Heart left ventricle (tissue), 16 donors: ENCODE measurements at regions of chr19 and their contacts with region 1.

Region 1: GRCh38 chr19:13060964-13061927 is 41.4 kb downstream of the LYL1 start:
- DNase-seq: peak; percentile 81 to 93 (median 90)
- ATAC-seq: peak; percentile 51 to 80 (median 70)
- H3K4me3 ChIP-seq: peak overlapping the region in 11 of 12 donors; percentile 20 to 58 (median 48)
- H3K27ac ChIP-seq: peak overlapping the region; percentile 67 to 98 (median 96)
- H3K4me1 ChIP-seq: peaks cover 32 to 100% (median 99%) of the 10 kb centered on the region in 12 donors
- H3K27me3 ChIP-seq: no peaks in the 10 kb centered on the region
- CTCF ChIP-seq: peak; percentile 94 to 100 (median 98)
- POLR2A ChIP-seq: no peak

Region 2: DNA sequence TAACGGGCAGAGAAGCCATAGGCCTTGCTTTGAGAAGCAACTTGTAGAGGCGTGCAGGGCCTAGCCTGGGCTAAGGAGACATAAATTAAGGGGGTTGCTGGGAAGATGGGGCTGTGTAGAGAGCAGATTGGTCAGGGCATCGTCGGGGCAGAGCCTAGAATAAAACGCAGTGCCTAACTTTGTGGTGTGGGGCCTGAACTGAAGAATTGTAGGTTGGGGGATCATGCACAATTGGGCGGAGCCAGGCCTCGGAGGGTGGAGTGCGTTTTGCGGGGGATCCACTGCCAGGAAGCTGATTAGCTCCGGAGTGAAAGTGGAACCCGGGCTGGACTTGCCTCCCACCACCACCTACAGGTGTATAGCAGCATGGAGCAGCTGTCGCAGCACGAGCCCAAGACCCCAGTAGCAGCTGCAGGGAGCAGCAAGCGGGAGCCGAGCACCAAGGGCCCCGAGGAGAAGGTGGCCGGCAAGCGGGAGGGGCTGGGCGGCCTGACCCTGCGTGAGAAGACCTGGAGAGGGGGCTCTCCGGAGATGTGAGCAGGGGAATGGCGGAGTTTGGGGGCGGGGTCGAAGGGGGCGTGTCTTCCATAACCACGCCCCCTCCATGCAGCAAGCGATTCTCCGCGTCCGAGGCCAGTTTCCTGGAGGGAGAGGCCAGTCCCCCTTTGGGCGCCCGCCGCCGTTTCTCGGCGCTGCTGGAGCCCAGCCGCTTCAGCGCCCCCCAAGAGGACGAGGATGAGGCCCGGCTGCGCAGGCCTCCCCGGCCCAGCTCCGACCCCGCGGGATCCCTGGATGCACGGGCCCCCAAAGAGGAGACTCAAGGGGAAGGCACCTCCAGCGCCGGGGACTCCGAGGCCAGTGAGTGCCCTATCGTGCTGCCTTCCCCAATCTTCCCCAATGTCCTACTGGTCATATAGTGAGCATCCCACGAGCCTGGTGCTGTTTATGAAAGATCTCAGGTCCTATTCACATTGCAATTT is 193.8 kb before region 1 on chr19:
- intact Hi-C with region 1: no loop called
- DNase-seq: peak in 4 of 5 donors; percentile 39 to 73 (median 54)
- ATAC-seq: peak in 3 of 4 donors; percentile 44 to 66 (median 60)
- H3K4me3 ChIP-seq: peak overlapping the region in 10 of 12 donors; percentile 12 to 51 (median 40)
- H3K27ac ChIP-seq: no peak overlapping the region
- H3K4me1 ChIP-seq: peaks cover 0 to 9% (median 4%) of the 10 kb centered on the region in 12 donors
- H3K27me3 ChIP-seq: peaks cover 0 to 22% (median 6%) of the 10 kb centered on the region in 9 donors
- CTCF ChIP-seq: no peak
- POLR2A ChIP-seq: no peak

Region 3: GRCh38 chr19:12913011-12913561 is 148.2 kb before region 1 on chr19:
- intact Hi-C with region 1: no loop called
- DNase-seq: peak; percentile 73 to 85 (median 79)
- ATAC-seq: peak; percentile 77 to 92 (median 85)
- H3K4me3 ChIP-seq: peak overlapping the region in 9 of 12 donors; percentile 6 to 44 (median 24)
- H3K27ac ChIP-seq: peak overlapping the region; percentile 34 to 84 (median 65)
- H3K4me1 ChIP-seq: peaks cover 0 to 25% (median 19%) of the 10 kb centered on the region in 12 donors
- H3K27me3 ChIP-seq: no peaks in the 10 kb centered on the region
- CTCF ChIP-seq: no peak
- POLR2A ChIP-seq: no peak

Region 4: GRCh38 chr19:12983542-12984142 is 77.6 kb before region 1 on chr19:
- intact Hi-C with region 1: loop called (anchors 1 to 5 kb)
- DNase-seq: peak; percentile 73 to 92 (median 83)
- ATAC-seq: peak; percentile 30 to 83 (median 78)
- H3K4me3 ChIP-seq: peak overlapping the region in 10 of 12 donors; percentile 26 to 50 (median 42)
- H3K27ac ChIP-seq: peak overlapping the region in 1 of 12 donors; percentile 47
- H3K4me1 ChIP-seq: peaks cover 0 to 28% (median 15%) of the 10 kb centered on the region in 12 donors
- H3K27me3 ChIP-seq: peaks cover 0 to 5% (median 0%) of the 10 kb centered on the region in 9 donors
- CTCF ChIP-seq: peak; percentile 76 to 99 (median 97)
- POLR2A ChIP-seq: peak in 1 of 2 donors; percentile 27

Region 5: DNA sequence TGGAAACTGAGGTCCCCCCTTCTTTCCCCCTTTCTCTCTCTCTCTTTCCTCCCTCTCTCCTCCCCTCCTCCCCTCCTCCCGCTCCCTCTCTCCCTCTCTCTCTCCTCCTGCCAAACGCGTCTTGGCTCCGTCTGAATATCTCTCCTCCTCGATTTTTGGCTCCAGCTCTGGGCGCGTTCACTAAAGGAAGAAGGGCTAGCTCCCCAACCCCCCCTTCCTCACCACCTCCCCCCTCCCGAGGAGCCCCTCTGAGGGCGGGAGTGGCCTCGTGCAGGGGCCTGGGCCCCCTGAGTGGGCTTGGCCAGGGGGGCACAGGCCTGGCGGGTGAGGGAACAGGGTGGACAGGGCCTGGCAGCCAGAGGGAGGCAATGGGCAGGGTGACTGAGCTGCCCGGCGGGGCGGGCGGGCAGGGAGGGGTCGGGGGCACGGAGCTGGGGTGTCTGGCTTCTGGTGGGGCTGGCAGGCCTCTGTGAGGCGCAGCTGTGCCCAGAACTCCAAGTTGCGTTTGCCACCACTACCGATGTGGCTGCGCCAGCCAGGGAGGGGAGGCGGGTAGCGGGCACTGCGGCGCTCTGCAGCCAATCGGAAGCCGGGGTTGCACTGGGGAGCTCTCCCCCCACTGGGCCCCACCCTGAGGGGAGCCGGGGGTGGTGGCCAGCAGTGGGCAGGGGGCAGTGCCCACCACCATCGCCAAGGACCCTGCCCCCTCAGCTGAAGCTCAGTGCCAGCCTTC is 58.9 kb before region 1 on chr19:
- intact Hi-C with region 1: loop called in 4 of 10 experiments (anchors 5 kb)
- DNase-seq: peak; percentile 72 to 87 (median 76)
- ATAC-seq: peak; percentile 67 to 81 (median 74)
- H3K4me3 ChIP-seq: peak overlapping the region in 11 of 12 donors; percentile 8 to 51 (median 38)
- H3K27ac ChIP-seq: peak overlapping the region; percentile 80 to 97 (median 92)
- H3K4me1 ChIP-seq: peaks cover 0 to 80% (median 37%) of the 10 kb centered on the region in 12 donors
- H3K27me3 ChIP-seq: no peaks in the 10 kb centered on the region
- CTCF ChIP-seq: peak in 7 of 12 donors; percentile 7 to 51 (median 32)
- POLR2A ChIP-seq: no peak

Region 6: DNA sequence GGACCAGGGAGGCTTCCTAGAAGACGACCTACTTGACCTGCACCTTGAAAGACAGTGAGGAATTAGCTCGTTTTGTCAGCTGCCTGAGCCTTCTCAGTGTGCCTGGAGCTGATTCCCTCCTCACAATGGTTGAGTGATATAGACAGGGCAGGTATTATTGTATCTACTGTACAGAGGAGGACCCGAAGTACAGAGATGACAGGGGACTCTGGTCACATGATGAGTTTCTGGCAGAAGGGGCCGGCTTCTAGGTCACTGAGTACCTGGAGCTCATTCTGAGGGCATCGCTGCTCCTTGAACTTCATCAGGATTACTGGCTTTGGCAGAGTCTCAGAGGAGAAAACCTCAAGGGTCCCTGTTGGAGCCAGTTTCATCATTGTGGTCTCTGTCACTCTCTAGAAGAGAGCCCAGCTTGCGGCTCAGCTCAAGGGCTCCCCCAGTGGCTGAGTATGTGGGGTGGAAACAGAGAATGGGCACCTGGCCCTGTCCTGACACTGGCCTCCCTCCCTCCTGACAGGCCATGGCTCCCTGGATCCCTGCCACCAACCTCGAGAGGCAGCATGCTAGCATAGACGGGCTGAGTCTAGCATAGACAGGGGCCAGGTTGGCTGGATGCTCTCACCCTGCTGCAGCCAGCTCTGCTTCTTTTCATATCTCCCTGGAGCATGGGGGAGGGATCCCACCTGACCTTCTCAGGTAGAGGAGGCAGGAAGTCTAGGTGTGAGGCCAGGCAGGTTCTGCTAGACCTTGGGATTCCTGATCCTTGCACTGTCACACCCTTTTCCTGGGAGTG is 27.2 kb before region 1 on chr19:
- intact Hi-C with region 1: loop called in 6 of 10 experiments (anchors 2 to 5 kb)
- DNase-seq: peak; percentile 82 to 92 (median 88)
- ATAC-seq: peak; percentile 43 to 64 (median 58)
- H3K4me3 ChIP-seq: no peak overlapping the region
- H3K27ac ChIP-seq: peak overlapping the region; percentile 37 to 89 (median 78)
- H3K4me1 ChIP-seq: peaks cover 17 to 100% (median 96%) of the 10 kb centered on the region in 12 donors
- H3K27me3 ChIP-seq: no peaks in the 10 kb centered on the region
- CTCF ChIP-seq: peak; percentile 61 to 85 (median 78)
- POLR2A ChIP-seq: no peak

Region 7: DNA sequence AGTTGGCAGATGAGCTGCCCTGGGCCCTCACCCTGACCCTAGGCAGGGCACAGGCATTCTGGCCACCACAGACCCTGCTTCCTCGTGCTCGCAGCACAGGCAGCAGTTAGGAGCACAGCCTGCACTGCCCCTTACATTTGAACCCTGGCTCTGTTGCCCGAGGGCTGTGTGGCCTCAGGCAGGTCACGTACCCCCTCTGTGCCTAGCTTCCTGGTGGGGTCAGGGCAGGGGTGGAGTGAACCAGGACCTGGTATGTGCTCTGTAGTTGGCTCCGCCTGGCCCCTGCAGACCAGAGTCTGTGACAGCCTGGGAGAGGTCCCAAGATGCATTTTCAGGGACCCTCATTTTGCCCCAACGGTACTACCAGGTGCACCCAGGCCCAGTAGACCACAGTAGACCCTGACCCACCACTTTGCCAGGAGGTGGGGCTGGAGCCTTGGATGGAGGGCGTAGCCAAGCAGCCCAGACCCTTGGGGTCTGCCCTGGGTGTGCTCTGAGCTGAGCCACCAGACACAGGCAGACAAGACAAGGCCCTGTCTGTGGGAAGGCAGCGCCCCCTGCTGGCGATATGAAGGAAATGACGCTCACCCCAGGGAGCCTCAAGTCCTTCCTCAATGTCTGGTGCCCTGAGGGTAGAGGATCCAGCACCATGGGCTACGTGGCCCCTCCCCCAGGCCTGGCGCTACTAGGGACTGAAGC is 32.3 kb after region 1 on chr19:
- intact Hi-C with region 1: loop called in 4 of 10 experiments (anchors 2 to 5 kb)
- DNase-seq: peak; percentile 80 to 91 (median 84)
- ATAC-seq: peak; percentile 36 to 75 (median 62)
- H3K4me3 ChIP-seq: no peak overlapping the region
- H3K27ac ChIP-seq: peak overlapping the region; percentile 36 to 96 (median 82)
- H3K4me1 ChIP-seq: peaks cover 0 to 97% (median 76%) of the 10 kb centered on the region in 12 donors
- H3K27me3 ChIP-seq: peaks cover 0 to 12% (median 0%) of the 10 kb centered on the region in 9 donors
- CTCF ChIP-seq: peak; percentile 90 to 98 (median 96)
- POLR2A ChIP-seq: no peak

Region 8: DNA sequence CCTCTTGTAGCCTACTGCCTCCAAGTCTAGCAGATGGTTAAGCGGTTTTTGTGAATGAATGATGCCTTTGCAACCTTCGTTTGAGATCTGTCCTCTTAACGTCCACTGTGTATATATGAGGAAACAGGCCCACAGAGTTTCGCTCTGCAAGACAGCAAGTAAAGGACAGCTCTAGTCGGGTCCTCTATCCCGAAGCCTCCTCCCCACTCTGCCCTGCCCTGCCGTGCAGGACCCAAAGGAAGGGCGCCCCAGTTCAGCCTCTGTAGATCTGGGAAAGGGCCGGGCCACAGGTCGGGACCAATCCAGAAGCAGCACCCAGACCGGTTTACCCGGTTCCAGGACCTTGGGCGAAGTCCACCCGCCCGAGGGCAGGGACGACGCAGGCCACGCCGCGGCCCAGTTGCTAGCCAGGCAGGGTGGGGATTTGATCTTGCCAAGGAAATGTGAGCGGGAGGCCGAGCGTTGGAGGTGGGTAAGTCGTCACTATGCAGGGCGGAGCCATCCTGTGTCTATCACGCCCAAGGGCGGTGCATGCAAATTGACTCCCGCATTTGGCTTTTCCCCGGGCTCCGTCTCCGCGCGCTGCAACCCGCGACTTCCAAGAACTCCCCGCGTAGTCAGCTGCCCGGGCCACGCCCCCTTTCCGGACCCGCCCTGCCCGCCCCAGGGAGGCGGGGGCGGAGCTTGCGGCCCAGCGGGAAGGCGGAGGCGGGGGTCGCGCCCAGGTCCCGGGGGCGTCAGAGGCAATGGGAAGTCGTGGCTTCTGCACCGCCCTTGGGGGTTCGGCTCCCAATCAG is 101.5 kb after region 1 on chr19:
- intact Hi-C with region 1: no loop called
- DNase-seq: peak; percentile 98 to 99 (median 98)
- ATAC-seq: peak; percentile 84 to 91 (median 86)
- H3K4me3 ChIP-seq: peak overlapping the region in 11 of 12 donors; percentile 25 to 62 (median 50)
- H3K27ac ChIP-seq: peak overlapping the region; percentile 84 to 99 (median 96)
- H3K4me1 ChIP-seq: peaks cover 8 to 73% (median 47%) of the 10 kb centered on the region in 12 donors
- H3K27me3 ChIP-seq: no peaks in the 10 kb centered on the region
- CTCF ChIP-seq: peak in 1 of 12 donors; percentile 13
- POLR2A ChIP-seq: peak in 1 of 2 donors; percentile 75